Left cardiac atrium (tissue), 4 donors: ENCODE measurements at regions of chr7 and their contacts with region 1.

Region 1: DNA sequence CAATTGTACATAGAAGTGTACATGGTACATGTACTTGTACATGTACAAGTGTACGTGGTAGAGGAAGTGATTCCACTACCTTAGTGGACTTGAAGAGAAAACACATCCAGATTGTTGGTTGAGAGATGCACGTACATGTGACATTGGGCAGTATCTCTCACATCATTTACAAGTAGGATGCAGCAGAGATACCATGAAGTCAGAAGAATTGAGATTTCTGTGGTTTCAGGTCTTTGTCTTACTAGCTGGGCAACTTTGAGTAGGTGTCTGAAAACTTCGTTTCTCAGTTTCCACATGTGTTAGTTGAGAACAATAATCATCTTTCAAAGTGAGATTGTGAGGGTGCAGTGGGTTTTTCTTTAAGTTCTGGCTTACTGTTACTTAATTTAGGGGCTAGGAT is 21.5 kb downstream of the CLDN12 start:
- DNase-seq: no peak
- ATAC-seq: no peak

Region 2: DNA sequence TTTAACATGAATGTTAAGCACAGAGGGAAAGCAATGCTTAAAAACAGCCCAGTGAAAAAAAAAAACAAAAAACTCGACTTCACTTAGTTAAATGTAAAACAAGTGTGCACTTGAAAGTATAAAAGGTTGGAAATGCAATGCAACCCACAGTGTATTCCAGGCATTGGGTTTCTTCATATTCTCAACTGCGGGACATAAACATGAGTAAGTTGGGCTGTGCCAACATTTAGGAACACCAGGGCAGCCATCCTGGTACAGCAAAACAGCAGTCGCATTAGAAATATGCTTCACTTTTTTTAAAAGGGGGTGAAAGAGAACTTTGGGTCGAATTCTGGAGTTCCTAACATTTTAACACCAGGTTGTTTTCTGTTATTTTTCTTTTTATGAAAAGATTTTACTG is 269.5 kb before region 1 on chr7:
- intact Hi-C with region 1: loop called in 1 of 2 experiments (anchors 5 kb)
- DNase-seq: no peak
- ATAC-seq: no peak

Region 3: DNA sequence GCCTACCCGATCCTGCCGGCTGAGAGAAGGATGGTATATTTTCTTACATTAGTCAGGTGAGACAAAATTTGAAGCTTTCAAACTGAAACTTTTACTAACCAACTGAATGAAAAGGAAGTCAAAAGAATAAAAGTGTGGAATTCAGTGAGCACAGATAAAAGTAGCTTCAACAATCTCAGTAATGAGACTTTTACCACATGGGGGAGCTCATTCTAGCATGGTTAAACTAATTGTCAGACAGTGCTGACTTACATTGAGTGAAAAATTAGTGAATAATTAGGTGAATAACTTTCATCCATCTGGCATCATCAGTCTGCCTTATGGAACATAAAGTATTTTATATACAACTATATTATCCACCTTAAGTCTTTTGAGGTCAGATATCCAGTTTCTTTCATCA is 112.0 kb before region 1 on chr7:
- intact Hi-C with region 1: loop called in 1 of 2 experiments (anchors 10 kb)
- DNase-seq: no peak
- ATAC-seq: no peak

Region 4: DNA sequence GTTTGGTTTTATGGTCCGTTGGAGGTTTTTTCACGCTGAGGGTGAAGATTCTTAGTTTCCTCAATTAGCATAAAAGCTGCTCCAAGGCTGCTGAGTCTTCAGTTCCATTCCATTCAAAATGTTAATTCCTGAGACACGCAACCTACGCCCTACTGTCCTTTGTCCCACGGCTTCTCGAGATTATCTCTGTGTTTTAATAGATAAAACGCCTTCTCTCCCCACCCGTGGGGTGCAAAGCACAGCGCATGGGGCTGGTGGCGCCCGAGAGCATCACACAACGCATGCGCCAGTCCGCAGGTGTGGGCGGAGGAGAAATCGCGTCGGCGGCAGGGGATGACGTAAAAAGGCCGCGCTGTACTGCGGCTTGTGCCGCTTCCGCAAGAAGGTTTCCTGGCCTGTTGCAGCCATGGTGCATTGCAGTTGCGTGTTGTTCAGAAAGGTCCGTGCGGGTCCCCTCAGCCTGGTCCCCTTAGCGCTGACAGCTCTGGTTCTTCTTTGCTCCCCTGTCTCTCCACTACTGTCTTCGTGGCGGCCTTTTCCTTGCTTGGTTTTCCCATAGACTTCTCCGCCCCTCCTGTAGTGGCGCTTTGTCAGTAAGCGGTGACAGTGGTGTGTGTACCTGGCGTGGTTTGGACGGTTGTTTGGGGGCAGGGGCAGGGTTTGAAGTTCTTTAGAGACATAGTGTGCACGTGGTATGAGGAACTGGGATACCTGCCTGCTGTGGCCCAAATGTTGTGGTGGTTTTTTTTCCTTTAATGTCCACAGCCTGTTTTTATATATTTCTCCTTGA is 78.2 kb before region 1 on chr7 and contains the start of gene GTPBP10:
- intact Hi-C with region 1: loop called in 1 of 2 experiments (anchors 5 kb)
- DNase-seq: peak; percentile 96
- ATAC-seq: peak; percentile 100
- total RNA-seq, gene GTPBP10: 17.8 to 24.3 TPM